Naive thymus-derived CD4-positive, alpha-beta T cell (primary cell): ENCODE measurements at regions of chr7 and their contacts with region 1.

Region 1: GRCh38 chr7:98168181-98168905 is 42.9 kb upstream of the BHLHA15 start:
- DNase-seq: peak; percentile 13 to 65 (median 49)
- ATAC-seq: peak; percentile 85
- H3K4me3 ChIP-seq: no peak overlapping the region
- H3K4me3 Mint-ChIP-seq: no peak overlapping the region
- H3K27ac ChIP-seq: no peak overlapping the region
- H3K27ac Mint-ChIP-seq: peak overlapping the region in 2 of 9 donors; percentile 26 to 38
- H3K4me1 ChIP-seq: no peaks in the 10 kb centered on the region
- H3K4me1 Mint-ChIP-seq: peaks cover 11 to 34% (median 26%) of the 10 kb centered on the region in 7 donors
- H3K27me3 ChIP-seq: no peaks in the 10 kb centered on the region
- H3K27me3 Mint-ChIP-seq: no peaks in the 10 kb centered on the region

Region 2: GRCh38 chr7:97117372-97118188 is 1050.8 kb before region 1 on chr7 and contains the start of gene SDHAF3:
- CTCF ChIA-PET with region 1: no interaction called
- POLR2A ChIA-PET with region 1: no interaction called
- intact Hi-C with region 1: loop called in 1 of 2 experiments (anchors 10 kb)
- DNase-seq: peak; percentile 97 to 98 (median 98)
- ATAC-seq: peak; percentile 98
- H3K4me3 ChIP-seq: peak within 1 kb of the TSS; percentile 90
- H3K4me3 Mint-ChIP-seq: peak within 1 kb of the TSS; percentile 87 to 98 (median 96)
- H3K27ac ChIP-seq: peak within 1 kb of the TSS; percentile 71
- H3K27ac Mint-ChIP-seq: peak within 1 kb of the TSS; percentile 87 to 97 (median 94)
- H3K4me1 ChIP-seq: peaks cover 7 to 15% of the 10 kb centered on the region in 2 donors
- H3K4me1 Mint-ChIP-seq: peaks cover 17 to 67% (median 57%) of the 10 kb centered on the region in 7 donors
- H3K27me3 ChIP-seq: no peaks in the 10 kb centered on the region
- H3K27me3 Mint-ChIP-seq: peaks cover 0 to 2% (median 0%) of the 10 kb centered on the region in 5 donors
- total RNA-seq, gene SDHAF3: 8.4 to 16.5 (median 14.3) TPM

Region 3: GRCh38 chr7:97317575-97317974 is 850.8 kb before region 1 on chr7:
- CTCF ChIA-PET with region 1: no interaction called
- POLR2A ChIA-PET with region 1: no interaction called
- intact Hi-C with region 1: no loop called
- DNase-seq: no peak
- ATAC-seq: no peak
- H3K4me3 ChIP-seq: no peak overlapping the region
- H3K4me3 Mint-ChIP-seq: no peak overlapping the region
- H3K27ac ChIP-seq: no peak overlapping the region
- H3K27ac Mint-ChIP-seq: no peak overlapping the region
- H3K4me1 ChIP-seq: no peaks in the 10 kb centered on the region
- H3K4me1 Mint-ChIP-seq: peaks cover 0 to 2% (median 0%) of the 10 kb centered on the region in 7 donors
- H3K27me3 ChIP-seq: no peaks in the 10 kb centered on the region
- H3K27me3 Mint-ChIP-seq: peaks cover 0 to 6% (median 0%) of the 10 kb centered on the region in 5 donors

Region 4: DNA sequence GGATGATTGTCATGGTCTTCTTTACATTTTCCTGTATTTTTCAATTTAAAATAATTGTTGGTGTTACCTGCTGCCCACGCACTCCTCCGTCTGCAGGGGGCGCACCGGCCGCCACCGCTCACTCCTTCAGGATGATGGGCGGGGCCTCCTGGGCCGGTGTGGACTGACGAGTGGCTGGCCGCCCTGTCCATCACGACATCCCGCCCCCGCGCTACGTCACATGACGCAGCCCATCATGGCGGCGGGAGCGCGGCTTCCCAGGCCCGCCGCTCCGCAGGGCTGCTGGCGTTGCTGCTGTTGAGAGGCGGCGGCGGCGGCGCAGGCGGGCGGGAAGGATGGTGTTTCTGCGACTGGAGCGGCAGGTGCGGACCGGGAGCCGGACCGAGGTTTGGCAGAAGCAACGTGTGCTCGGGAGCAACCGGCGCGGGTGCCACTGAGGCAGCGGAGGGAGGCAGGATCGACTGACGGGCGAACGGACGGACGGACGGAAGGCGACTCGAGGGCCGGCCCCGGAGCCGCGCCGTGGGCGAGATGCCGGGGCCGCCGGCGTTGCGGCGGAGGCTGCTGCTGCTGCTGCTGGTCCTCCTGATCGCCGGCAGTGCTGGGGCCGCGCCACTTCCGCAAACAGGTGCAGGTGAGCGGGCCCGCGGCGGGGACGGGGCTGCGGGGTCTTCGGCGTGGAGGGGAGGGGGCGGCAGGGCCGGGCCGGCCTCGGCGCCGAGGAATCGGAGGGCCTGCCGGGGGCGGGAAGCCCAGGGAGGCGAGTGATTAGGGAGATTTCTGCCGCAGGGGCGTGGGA is 61.5 kb before region 1 on chr7 and contains the start of gene LMTK2:
- CTCF ChIA-PET with region 1: interaction called, 20 read pairs
- POLR2A ChIA-PET with region 1: interaction called, 8 read pairs
- intact Hi-C with region 1: loop called (anchors 1 kb)
- DNase-seq: peak; percentile 92 to 100 (median 97)
- ATAC-seq: peak; percentile 100
- H3K4me3 ChIP-seq: peak within 1 kb of the TSS; percentile 66
- H3K4me3 Mint-ChIP-seq: peak within 1 kb of the TSS; percentile 90 to 99 (median 96)
- H3K27ac ChIP-seq: peak within 1 kb of the TSS; percentile 92
- H3K27ac Mint-ChIP-seq: peak within 1 kb of the TSS; percentile 22 to 97 (median 89)
- H3K4me1 ChIP-seq: peaks cover 10 to 26% of the 10 kb centered on the region in 2 donors
- H3K4me1 Mint-ChIP-seq: peaks cover 23 to 51% (median 48%) of the 10 kb centered on the region in 7 donors
- H3K27me3 ChIP-seq: no peaks in the 10 kb centered on the region
- H3K27me3 Mint-ChIP-seq: peaks cover 0 to 12% (median 7%) of the 10 kb centered on the region in 5 donors
- total RNA-seq, gene LMTK2: 13.2 to 29.1 (median 25.9) TPM

Region 5: GRCh38 chr7:98125759-98126158 is 42.6 kb before region 1 on chr7:
- CTCF ChIA-PET with region 1: no interaction called
- POLR2A ChIA-PET with region 1: no interaction called
- intact Hi-C with region 1: no loop called
- DNase-seq: no peak
- ATAC-seq: peak; percentile 53
- H3K4me3 ChIP-seq: no peak overlapping the region
- H3K4me3 Mint-ChIP-seq: no peak overlapping the region
- H3K27ac ChIP-seq: no peak overlapping the region
- H3K27ac Mint-ChIP-seq: no peak overlapping the region
- H3K4me1 ChIP-seq: no peaks in the 10 kb centered on the region
- H3K4me1 Mint-ChIP-seq: peaks cover 0 to 62% (median 53%) of the 10 kb centered on the region in 7 donors
- H3K27me3 ChIP-seq: no peaks in the 10 kb centered on the region
- H3K27me3 Mint-ChIP-seq: peaks cover 0 to 5% (median 0%) of the 10 kb centered on the region in 5 donors

Region 6: GRCh38 chr7:98178762-98179495 is 10.6 kb after region 1 on chr7:
- CTCF ChIA-PET with region 1: interaction called, 13 read pairs
- POLR2A ChIA-PET with region 1: interaction called, 3 read pairs
- intact Hi-C with region 1: no loop called
- DNase-seq: no peak
- ATAC-seq: no peak
- H3K4me3 ChIP-seq: no peak overlapping the region
- H3K4me3 Mint-ChIP-seq: no peak overlapping the region
- H3K27ac ChIP-seq: no peak overlapping the region
- H3K27ac Mint-ChIP-seq: no peak overlapping the region
- H3K4me1 ChIP-seq: no peaks in the 10 kb centered on the region
- H3K4me1 Mint-ChIP-seq: peaks cover 0 to 10% (median 0%) of the 10 kb centered on the region in 7 donors
- H3K27me3 ChIP-seq: no peaks in the 10 kb centered on the region
- H3K27me3 Mint-ChIP-seq: no peaks in the 10 kb centered on the region

Region 7: GRCh38 chr7:98400542-98401340 is 232.4 kb after region 1 on chr7 and contains the start of gene BAIAP2L1:
- CTCF ChIA-PET with region 1: no interaction called
- POLR2A ChIA-PET with region 1: no interaction called
- intact Hi-C with region 1: loop called in 1 of 2 experiments (anchors 1 kb)
- DNase-seq: peak; percentile 54 to 82 (median 70)
- ATAC-seq: peak; percentile 96
- H3K4me3 ChIP-seq: peak within 1 kb of the TSS; percentile 41
- H3K4me3 Mint-ChIP-seq: peak within 1 kb of the TSS; percentile 66 to 84 (median 74)
- H3K27ac ChIP-seq: peak within 1 kb of the TSS; percentile 39
- H3K27ac Mint-ChIP-seq: peak within 1 kb of the TSS in 5 of 9 donors; percentile 25 to 75 (median 59)
- H3K4me1 ChIP-seq: peaks cover 0 to 5% of the 10 kb centered on the region in 2 donors
- H3K4me1 Mint-ChIP-seq: peaks cover 0 to 14% (median 6%) of the 10 kb centered on the region in 7 donors
- H3K27me3 ChIP-seq: no peaks in the 10 kb centered on the region
- H3K27me3 Mint-ChIP-seq: peaks cover 0 to 23% (median 9%) of the 10 kb centered on the region in 5 donors
- total RNA-seq, gene BAIAP2L1: 0.32 to 2.0 (median 0.56) TPM